Left ventricle myocardium inferior (tissue), 1 donor: ENCODE measurements at regions of chr3 and their contacts with region 1.

Region 1: DNA sequence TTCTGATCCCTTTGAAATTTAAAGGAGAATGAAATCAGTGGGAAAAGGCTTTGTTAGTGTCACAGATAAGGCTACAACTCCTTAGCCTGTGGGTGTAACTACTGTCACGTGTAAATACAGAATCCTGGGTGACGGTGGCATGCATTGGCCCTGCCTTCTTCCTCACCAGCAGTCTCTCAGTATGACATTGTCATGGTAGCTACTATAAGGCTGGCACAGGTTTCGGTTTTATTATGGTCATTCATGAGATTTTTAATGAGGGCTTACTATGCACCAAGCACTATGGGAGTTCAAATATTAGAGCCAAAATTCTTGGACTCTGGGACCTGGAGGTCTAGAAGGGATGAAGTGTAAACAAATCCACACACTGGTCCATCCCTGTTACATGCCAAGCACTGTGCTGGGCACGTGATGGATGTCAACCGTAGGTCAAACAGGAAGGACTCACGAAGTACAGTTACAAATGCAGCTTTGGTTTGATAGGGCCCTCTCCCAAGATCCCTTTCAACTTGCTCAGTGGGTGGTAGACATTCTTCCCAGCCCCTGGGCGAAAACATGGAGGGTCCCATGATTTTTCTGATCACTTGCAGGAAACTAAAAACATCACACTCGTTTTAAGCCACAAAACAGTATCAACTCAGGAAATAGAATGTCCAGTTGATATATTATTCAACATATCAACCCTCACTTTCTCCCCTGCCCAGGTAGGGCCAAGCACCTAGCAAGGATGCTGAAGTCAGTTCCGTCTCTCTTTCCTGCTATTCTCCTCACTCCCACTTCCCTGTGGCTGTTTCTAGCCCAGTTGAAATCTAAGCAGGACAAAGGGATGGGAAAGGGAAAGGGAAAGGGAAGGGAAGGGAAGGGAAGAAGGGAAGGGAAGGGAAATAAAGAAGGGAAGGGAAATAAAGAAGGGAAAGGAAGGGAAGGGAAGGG is 25.3 kb downstream of the BFSP2 start:
- DNase-seq: no peak
- H3K4me3 ChIP-seq: no peak overlapping the region
- H3K27ac ChIP-seq: no peak overlapping the region
- H3K4me1 ChIP-seq: no peaks in the 10 kb centered on the region
- H3K27me3 ChIP-seq: peaks cover 70% of the 10 kb centered on the region
- CTCF ChIP-seq: no peak

Region 2: DNA sequence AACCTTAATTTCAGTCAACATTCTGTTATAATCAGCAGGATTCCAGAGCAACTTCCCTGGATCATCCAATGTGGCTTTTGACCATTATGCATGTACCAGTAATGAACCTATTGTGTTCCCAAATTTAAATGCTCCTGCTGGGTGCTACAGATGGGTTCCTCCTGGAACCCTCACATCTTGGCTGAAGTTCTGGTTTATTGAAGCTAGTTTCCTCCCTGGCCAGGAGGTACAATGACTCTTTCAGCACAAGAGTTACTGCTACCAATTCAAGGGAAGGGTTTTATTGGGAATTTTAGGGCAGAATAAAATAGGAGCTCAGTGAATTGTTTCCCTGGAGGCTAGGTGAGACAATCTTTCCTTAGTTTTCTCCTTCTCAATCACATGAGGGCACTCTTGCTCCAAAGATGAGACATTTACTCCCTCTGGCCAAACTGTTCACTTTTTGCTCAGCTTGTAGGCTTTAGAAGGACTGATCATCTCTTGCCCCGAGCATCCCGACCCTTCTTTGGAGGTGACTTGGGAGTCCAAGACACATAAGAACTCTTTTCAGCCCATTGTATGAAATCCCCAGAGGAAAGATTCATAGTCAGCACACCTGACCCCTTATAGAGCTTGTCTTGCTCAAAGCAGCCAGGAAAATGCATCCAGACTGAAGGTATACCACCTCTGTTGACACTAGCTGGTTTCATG is 694.2 kb before region 1 on chr3:
- intact Hi-C with region 1: loop called (anchors 5 kb)
- DNase-seq: no peak
- H3K4me3 ChIP-seq: no peak overlapping the region
- H3K27ac ChIP-seq: no peak overlapping the region
- H3K4me1 ChIP-seq: peaks cover 6% of the 10 kb centered on the region
- H3K27me3 ChIP-seq: peaks cover 5% of the 10 kb centered on the region
- CTCF ChIP-seq: peak; percentile 60

Region 3: DNA sequence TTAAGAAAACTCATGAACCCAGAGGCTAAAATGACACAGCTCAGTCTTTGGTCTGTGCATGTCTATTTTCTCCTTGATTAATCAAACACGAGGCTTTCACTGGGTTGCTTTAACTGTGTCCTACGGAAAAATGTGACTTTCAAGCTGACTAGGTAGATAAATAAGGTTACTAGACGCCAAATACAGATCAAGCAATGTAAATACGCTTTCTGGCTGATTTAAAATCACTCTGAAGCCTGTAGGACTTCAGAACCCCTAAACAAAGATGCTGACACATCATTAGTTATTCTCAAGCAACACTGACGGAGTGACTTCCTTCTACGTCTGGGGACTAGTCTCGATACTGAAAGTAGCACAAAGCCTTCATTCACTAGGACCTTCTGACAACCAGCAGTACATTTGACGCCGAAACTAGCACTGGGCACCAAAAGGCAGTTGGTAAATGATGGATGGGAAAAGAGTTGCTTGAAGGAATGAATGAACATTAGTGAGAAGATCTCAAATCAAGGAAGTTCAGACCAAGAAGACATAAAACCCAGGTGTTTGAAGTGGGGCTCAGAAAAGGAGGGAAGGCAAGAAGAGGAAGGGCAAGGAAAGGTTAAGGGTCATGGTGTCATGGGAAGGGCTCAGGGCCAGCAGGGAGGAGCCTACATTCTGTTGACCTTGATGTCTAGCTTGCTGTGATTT is 81.2 kb after region 1 on chr3:
- intact Hi-C with region 1: no loop called
- DNase-seq: no peak
- H3K4me3 ChIP-seq: no peak overlapping the region
- H3K27ac ChIP-seq: no peak overlapping the region
- H3K4me1 ChIP-seq: peaks cover 3% of the 10 kb centered on the region
- H3K27me3 ChIP-seq: peaks cover 4% of the 10 kb centered on the region
- CTCF ChIP-seq: no peak